Posterior vena cava (tissue), 2 donors: ENCODE measurements at regions of chr19 and their contacts with region 1.

Region 1: DNA sequence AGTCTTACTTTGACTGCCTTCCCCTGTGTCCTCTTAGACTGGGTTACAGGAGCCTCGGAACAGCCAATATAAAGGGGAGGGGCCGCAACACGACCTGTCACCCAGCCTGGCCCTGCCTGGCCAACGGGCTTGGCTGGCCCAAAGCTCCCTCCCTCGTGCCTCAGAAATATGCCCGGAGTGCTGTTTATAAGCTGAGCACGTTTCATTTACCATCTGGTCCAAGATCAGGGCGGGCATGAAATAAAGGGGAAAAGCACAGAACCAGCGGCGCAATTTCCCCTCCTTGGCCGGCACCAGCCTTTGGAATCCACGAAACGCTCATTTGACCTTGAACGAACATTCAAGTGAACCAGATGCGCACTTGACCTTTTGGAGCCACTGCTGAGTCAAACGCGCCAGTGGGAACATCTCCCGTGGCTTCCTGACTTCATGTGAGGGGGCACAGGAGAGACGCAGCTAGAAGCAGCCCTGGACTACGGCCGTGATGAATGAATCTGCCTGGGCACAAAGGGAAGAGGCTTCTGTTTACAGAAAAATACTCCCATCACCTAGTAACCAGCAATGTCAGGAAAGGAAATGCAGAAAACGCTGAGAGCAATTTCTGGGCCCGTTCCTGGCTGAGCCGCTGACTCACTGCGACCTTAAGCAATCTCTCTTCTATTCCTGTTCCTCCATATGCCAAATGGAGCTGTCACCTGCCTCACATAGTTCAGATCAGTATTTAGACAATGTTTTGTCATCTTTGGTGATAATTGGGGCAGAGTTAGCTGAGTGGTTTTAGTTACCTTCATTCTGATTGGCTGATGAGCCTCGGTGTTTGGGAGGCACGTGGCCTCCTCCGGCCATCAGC is 53.3 kb downstream of the RFX2 start:
- DNase-seq: peak; percentile 96

Region 2: GRCh38 chr19:6103217-6103644 is 46.2 kb after region 1 on chr19:
- intact Hi-C with region 1: loop called (anchors 5 kb)
- DNase-seq: peak; percentile 93

Region 3: DNA sequence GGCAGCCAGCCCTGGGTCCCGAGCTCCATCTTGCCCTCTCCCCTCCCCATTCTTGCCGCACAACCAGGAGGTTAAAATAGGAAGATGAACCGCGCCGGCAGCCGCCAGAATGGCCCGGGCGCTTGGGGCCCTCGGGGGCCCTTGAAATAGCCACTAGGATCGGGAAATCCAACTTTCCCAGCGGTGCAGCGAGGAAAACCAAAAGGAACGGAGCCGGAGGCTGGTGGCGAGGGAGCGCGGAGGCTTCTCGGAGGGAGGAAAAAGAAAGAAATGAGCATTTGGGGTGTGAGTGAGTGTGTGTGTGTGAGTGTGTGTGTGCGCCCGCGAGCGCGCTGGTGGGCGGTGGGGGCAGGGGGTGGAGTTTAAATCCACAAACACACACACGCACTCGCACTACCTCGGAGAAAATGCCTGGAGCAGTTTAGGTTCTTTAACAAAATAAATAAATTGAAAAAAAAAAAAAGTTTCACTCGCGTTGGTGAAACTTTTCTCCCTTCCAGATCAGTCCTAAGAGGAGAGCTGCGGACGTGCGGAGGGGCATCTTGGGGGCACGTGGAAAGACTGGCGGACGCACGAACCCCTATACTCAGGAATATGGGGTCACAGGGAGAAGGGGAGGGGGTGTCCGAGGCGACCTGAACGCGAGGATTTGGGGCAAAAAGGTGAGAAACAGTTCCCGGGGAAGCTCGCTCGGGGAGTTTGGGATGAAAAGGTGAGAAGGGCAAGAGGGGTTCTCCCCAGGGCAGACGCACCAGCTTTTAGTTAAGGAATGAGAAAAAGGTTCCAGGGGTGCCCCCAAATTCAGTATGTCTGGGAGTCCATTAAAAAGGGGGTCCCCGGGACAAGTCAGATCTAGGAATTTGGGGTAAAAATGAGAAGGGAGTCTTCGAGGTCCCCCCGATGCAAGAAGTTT is 52.0 kb after region 1 on chr19:
- intact Hi-C with region 1: loop called (anchors 5 kb)
- DNase-seq: peak; percentile 94